ENCODE measurements at regions of chr1 and their contacts with region 1.

Region 1: GRCh38 chr1:205255941-205256780 is 28.4 kb downstream of the TMCC2 start:
- H3K4me3 ChIP-seq: no peak overlapping the region
- H3K27ac ChIP-seq: no peak overlapping the region
- H3K4me1 ChIP-seq: no peaks in the 10 kb centered on the region
- CTCF ChIP-seq: peak; percentile 94

Region 2: GRCh38 chr1:204989266-204990058 is 266.7 kb before region 1 on chr1:
- CTCF ChIA-PET with region 1: interaction called, 97 read pairs
- POLR2A ChIA-PET with region 1: no interaction called
- H3K4me3 ChIP-seq: no peak overlapping the region
- H3K27ac ChIP-seq: no peak overlapping the region
- H3K4me1 ChIP-seq: no peaks in the 10 kb centered on the region
- CTCF ChIP-seq: peak; percentile 88

Region 3: DNA sequence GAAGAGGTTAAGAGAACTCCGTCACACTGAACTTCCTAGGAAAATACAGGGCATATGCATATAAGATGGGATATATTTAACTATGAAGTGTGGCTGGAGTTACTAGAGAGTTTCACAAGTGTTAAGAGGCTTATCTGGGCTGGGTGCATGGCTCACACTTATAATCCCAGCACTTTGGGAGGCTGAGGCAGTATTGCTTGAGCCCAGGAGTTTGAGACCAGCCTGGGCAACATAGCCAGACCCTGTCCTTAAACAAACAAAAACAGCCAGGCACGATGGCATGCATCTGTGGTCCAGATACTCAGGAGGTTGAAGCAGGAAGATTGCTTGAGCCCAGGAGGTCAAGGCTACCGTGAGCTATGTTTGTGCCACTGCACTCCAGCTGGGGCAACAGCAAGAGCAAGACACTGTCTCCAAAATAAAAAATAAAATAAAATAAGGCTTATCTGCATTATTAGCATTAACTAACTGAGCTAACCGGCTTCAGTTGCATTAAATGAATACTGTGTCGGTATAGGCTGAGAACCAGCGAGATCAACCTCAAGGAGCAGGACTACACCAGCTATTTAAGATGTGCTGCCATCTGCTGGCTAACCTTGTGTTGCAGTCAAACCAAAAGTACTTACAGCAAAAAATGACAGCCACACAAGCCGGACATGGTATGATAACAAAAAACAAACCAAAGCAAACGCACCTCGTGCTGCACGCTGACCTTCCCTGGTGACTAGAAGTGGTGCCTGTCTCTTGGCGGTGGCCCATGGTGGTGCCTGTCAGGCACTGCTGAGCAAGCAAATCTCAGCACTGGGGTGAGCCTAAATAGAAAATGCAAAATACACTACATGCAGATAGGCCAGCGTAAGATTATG is 114.7 kb before region 1 on chr1:
- CTCF ChIA-PET with region 1: interaction called, 29 read pairs
- POLR2A ChIA-PET with region 1: no interaction called
- H3K4me3 ChIP-seq: no peak overlapping the region
- H3K27ac ChIP-seq: no peak overlapping the region
- H3K4me1 ChIP-seq: no peaks in the 10 kb centered on the region
- CTCF ChIP-seq: peak; percentile 67

Region 4: DNA sequence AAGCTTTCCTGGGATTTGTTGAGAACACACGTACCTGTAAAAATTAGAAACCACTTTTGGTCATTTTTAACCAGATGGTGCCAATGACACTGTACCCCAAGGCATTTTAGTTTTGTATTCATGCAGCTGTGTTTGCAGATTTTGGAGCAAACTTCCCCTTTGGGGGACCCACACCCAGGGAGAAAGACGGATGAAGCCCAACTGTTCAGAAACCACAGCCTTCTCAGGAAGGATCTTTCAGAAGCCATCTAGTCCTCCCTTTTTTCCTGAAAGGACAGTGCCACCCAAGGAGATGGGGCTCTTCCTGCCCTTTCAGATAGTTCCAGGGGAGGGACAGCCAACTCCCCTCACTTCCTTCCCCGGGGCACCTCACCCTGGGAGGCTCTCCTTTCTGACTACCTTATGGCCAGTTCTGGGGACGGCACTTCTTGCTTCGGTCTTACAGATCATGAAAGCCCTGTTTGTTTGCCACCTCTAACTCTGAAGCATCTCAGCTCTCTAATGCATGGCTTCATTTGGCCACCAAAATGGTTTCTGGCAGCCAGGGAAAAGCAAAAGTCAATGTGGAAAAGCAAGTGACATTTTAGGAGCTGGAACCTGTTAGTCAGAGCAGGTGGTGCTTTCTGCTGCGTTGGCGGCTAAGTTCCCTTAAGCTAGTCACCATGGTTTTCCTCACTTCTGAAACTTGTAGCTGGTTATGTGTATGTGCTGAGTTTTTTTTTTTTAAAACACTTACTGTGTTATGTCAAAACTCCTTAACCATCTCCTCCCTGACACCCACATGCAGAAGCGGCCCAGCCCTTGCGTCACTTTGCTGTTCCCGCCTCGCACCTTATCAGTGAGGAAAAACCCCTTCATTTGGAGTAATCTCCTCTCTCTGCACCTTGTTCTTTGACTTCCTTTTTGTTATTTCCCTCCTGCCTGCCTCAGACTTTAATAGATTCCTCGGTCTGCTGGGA is 18.4 kb before region 1 on chr1:
- CTCF ChIA-PET with region 1: interaction called, 253 read pairs
- POLR2A ChIA-PET with region 1: interaction called, 5 read pairs
- H3K4me3 ChIP-seq: no peak overlapping the region
- H3K27ac ChIP-seq: no peak overlapping the region
- H3K4me1 ChIP-seq: no peaks in the 10 kb centered on the region
- CTCF ChIP-seq: no peak

Region 5: GRCh38 chr1:205273551-205273982 is 17.4 kb after region 1 on chr1:
- CTCF ChIA-PET with region 1: interaction called, 45 read pairs
- POLR2A ChIA-PET with region 1: no interaction called
- H3K4me3 ChIP-seq: no peak overlapping the region
- H3K27ac ChIP-seq: no peak overlapping the region
- H3K4me1 ChIP-seq: no peaks in the 10 kb centered on the region
- CTCF ChIP-seq: peak; percentile 93

Region 6: DNA sequence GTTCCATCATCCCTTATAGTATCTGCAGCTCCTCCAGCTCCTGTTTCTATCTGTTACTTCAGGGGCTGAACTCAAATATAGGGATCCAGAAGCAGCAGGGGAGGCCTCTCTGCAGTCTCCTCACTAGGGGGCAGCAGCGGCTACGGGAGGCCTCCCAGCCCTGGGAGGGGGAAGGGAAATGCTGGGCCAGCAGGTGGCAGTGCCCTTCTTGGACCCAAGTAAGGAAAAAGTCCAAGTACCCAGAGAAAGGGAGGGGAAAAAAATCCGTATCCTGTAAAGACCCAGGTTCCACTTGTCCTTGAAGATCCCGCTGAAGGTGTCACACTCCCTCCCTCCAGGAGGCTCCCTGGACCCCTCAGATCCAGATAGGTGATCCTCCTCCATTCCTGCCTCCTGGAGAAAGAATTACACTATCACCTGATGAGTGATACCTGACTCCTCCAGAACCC is 79.5 kb after region 1 on chr1:
- CTCF ChIA-PET with region 1: interaction called, 16 read pairs
- POLR2A ChIA-PET with region 1: no interaction called
- H3K4me3 ChIP-seq: no peak overlapping the region
- H3K27ac ChIP-seq: no peak overlapping the region
- H3K4me1 ChIP-seq: 0 out of 2 replicates have a peak, but pooled peaks cover 2% of the 10 kb centered on the region
- CTCF ChIP-seq: peak; percentile 97

Region 7: DNA sequence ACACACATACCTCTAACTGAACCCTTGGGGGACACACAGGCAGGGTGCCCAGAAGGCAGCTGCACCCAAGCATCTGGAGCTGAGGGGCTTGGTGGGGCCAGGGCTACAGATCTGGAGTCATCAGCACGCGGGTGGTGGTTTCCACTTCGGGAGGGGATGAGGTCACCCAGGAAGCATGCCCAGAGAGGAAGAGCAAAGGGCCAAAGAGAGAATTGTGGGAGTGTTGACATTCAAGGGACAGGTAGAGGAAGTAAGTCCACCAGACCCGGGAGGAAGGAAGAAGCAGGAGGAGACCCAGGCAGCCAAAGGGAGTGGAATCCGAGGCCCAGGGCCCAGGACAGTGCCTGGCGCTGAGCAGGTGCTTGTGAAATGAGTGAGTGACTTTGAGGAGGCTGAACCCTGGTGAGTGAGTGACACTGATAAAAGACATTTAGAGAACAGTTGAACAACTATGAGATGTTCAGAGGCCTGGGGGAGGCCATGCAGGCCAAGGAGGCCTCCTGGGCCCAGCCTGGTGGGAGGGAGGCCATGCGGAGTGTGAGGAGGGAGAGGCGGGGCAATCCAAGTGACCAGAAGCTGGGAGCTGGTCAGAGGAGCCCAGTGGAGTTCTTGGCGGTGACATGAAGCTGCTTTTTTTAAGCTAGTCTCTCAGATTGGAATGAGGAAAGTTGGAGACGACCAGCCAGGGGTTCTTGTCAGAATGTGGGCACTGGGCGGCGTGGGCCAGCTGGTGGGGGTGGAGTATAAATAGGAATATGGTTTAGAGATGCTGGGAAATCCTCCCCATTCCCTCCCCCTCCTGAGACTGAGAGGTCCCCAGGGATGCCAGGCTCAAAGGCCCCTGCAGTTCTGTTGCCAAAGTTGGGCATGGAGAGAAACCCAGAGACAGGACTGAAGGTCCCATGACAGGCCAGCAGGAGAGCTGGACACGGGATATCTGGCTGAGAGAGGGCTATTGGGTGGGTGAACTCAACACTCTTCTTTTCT is 256.2 kb after region 1 on chr1:
- CTCF ChIA-PET with region 1: no interaction called
- POLR2A ChIA-PET with region 1: no interaction called
- H3K4me3 ChIP-seq: no peak overlapping the region
- H3K27ac ChIP-seq: no peak overlapping the region
- H3K4me1 ChIP-seq: no peaks in the 10 kb centered on the region
- CTCF ChIP-seq: no peak

Measured in HEK293 (cell line).